ENCODE measurements at regions of chr1 and their contacts with region 1.

Region 1: GRCh38 chr1:53435151-53435550 is 24.0 kb upstream of the DMRTB1 start:
- H3K4me3 ChIP-seq: no peak overlapping the region
- H3K27ac ChIP-seq: no peak overlapping the region
- H3K4me1 ChIP-seq: no peaks in the 10 kb centered on the region
- CTCF ChIP-seq: no peak

Region 2: DNA sequence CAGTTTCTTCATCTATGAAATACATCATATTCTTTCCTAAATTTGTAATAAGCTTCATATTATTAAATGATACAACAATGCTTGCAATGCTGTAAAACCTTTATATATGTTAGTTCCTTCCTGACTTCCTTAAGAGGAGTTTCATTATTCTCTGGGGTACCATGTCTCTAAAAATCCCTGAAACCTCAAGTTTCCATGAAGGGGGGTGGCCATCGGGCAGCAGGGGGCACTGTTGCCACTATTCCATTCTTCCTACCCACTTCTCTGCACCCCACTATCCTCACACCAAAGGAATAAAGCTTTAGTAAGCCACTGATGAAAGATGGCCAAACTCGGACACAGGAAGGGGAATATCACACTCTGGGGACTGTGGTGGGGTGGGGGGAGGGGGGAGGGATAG is 15.1 kb after region 1 on chr1:
- CTCF ChIA-PET with region 1: interaction called, 13 read pairs
- POLR2A ChIA-PET with region 1: no interaction called
- H3K4me3 ChIP-seq: no peak overlapping the region
- H3K27ac ChIP-seq: no peak overlapping the region
- H3K4me1 ChIP-seq: 0 out of 2 replicates have a peak, but pooled peaks cover 3% of the 10 kb centered on the region
- CTCF ChIP-seq: no peak

Region 3: GRCh38 chr1:53526451-53527101 is 91.4 kb after region 1 on chr1:
- CTCF ChIA-PET with region 1: no interaction called
- POLR2A ChIA-PET with region 1: no interaction called
- H3K4me3 ChIP-seq: no peak overlapping the region
- H3K27ac ChIP-seq: no peak overlapping the region
- H3K4me1 ChIP-seq: 0 out of 2 replicates have a peak, but pooled peaks cover 2% of the 10 kb centered on the region
- CTCF ChIP-seq: no peak